PC-9 (cell line): ENCODE measurements at regions of chr17 and their contacts with region 1.

Region 1: DNA sequence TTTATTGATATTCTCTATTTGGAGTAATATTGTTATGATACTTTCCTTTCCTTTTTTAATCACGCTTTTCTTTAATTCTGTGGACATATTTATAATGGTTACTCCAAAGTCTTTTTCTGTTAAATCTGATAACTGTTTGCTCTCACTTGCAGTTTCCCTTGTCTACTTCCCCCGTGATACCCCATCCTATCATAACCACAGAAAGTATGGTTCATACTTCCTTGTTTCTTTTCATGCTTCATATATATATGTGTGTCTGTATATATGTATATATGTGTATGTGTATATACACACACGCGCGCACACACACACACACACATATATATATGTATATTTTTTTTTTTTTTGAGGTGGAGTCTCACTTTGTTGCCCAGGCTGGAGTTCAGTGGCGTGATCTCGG is 23.5 kb downstream of the SPECC1 start:
- DNase-seq: no peak
- H3K4me3 ChIP-seq: no peak overlapping the region
- H3K27ac ChIP-seq: no peak overlapping the region
- H3K4me1 ChIP-seq: peaks cover 15% of the 10 kb centered on the region
- H3K27me3 ChIP-seq: no peaks in the 10 kb centered on the region
- CTCF ChIP-seq: no peak

Region 2: DNA sequence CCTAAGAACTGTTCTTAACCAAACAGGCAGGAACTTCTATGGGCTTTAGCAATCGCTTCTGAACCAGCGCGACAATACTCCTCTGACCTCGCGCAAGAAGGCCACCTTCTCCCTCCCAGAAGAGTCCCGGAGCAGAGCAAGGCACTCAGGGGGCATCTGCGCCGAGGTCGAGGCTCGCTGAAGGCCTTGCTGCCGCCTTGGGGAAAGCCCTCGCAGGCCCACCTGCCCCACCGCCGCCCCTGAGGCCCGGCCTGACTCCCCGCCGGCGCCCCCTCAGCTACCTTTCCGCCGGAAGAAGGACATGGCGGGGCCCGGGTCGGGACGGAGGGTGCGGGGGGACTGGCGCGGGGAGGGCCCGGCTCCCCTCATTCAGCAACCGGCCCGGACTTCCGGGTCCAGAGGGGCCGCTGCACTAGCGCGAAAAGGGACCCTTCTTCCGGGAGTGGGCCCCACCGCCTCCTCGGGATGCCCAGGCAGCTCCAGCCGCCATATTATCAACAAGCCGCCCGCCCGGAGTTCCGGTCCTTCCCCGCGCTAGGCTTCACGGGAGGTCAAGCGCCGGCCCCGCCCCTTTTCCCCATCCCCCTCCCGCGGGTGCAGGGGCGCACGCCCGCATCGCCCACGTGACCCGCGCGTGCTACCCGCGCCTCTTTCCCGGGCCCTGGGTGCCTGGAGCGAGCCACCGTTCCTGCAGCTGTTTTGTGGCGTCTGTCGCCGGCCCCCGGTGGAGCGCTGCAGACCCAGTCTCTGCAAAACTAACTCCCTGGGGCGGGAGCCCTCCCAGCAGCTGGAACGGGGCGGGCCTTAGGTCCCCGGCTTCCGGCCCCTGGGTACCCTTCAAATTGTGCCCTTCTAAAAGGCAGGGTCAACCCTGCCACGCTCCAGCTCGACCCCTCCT is 55.1 kb before region 1 on chr17 and contains the start of gene AKAP10:
- CTCF ChIA-PET with region 1: no interaction called
- POLR2A ChIA-PET with region 1: interaction called, 12 read pairs
- intact Hi-C with region 1: no loop called
- DNase-seq: peak; percentile 56 to 91
- H3K4me3 ChIP-seq: peak within 1 kb of the TSS; percentile 84
- H3K27ac ChIP-seq: peak within 1 kb of the TSS; percentile 63
- H3K4me1 ChIP-seq: peaks cover 18% of the 10 kb centered on the region
- H3K27me3 ChIP-seq: no peaks in the 10 kb centered on the region
- CTCF ChIP-seq: no peak
- total RNA-seq, gene AKAP10: 52.7 and 56.9 TPM in 2 replicates